Activated CD8-positive, alpha-beta T cell treated with anti-CD3 and anti-CD28 coated beads, Interleukin-2, amount 10 ng/mL, durations not matched to agents 7 days and 5 days (primary cell): ENCODE measurements at regions of chr21 and their contacts with region 1.

Region 1: DNA sequence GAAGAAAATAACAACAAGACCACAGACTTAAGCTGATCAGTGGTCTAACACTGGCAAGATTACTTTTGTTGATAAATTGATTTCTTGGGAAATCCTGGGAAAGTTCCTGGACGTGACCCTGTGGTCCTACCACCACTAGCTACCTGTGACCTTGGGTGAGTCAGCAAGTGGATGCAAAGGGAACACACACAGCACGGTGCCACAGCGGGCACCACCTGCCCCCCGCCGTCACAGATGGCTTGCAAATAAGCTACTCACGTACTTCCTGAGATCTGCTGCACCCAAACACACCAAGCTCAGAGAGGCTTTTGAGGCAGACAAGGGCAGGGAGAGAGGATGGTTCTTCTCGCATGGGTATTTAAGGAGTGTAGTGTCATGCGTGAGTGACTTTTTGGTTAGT is 12.7 kb downstream of the CFAP298 start:
- DNase-seq: no peak
- ATAC-seq: no peak
- H3K4me3 Mint-ChIP-seq: no peak overlapping the region
- H3K27ac Mint-ChIP-seq: no peak overlapping the region
- H3K4me1 Mint-ChIP-seq: peaks cover 3% of the 10 kb centered on the region
- H3K27me3 Mint-ChIP-seq: no peaks in the 10 kb centered on the region

Region 2: GRCh38 chr21:32386195-32386870 is 213.2 kb before region 1 on chr21:
- CTCF ChIA-PET with region 1: interaction called, 26 read pairs
- POLR2A ChIA-PET with region 1: no interaction called
- DNase-seq: no peak
- ATAC-seq: no peak
- H3K4me3 Mint-ChIP-seq: no peak overlapping the region
- H3K27ac Mint-ChIP-seq: no peak overlapping the region
- H3K4me1 Mint-ChIP-seq: peaks cover 27% of the 10 kb centered on the region
- H3K27me3 Mint-ChIP-seq: no peaks in the 10 kb centered on the region

Region 3: DNA sequence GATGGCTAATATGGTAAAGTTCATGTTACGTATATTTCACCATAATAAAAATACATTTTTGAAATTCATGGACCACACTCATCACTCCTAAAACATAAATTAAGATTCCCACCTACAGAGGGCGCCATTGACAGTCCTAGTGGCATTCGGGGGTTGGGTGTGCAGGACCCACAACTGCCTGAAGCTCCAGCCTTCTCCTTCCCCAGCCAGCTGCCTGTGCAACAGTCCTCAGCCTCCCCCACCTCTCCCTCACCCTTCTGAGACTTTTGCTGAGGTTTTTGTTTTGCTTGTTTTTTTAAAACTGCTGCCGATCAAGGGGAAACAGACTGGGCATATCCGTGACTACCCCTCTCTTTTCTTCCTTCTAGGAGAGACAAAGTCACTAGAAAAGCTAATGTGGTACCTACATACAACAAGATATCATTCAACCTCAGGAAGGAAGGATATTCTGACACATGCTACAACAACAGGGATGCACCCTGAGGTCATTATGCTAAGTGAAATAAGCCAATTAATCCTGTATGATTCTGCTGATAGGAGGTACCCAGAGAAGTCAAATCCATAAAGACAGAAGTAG is 196.2 kb before region 1 on chr21:
- CTCF ChIA-PET with region 1: interaction called, 82 read pairs
- POLR2A ChIA-PET with region 1: no interaction called
- DNase-seq: peak; percentile 74
- ATAC-seq: peak; percentile 87
- H3K4me3 Mint-ChIP-seq: no peak overlapping the region
- H3K27ac Mint-ChIP-seq: no peak overlapping the region
- H3K4me1 Mint-ChIP-seq: peaks cover 13% of the 10 kb centered on the region
- H3K27me3 Mint-ChIP-seq: peaks cover 14% of the 10 kb centered on the region

Region 4: GRCh38 chr21:32569261-32570230 is 30.0 kb before region 1 on chr21:
- CTCF ChIA-PET with region 1: interaction called, 40 read pairs
- POLR2A ChIA-PET with region 1: no interaction called
- DNase-seq: peak; percentile 90
- ATAC-seq: peak; percentile 97
- H3K4me3 Mint-ChIP-seq: peak overlapping the region; percentile 79
- H3K27ac Mint-ChIP-seq: peak overlapping the region; percentile 83
- H3K4me1 Mint-ChIP-seq: peaks cover 22% of the 10 kb centered on the region
- H3K27me3 Mint-ChIP-seq: no peaks in the 10 kb centered on the region

Region 5: DNA sequence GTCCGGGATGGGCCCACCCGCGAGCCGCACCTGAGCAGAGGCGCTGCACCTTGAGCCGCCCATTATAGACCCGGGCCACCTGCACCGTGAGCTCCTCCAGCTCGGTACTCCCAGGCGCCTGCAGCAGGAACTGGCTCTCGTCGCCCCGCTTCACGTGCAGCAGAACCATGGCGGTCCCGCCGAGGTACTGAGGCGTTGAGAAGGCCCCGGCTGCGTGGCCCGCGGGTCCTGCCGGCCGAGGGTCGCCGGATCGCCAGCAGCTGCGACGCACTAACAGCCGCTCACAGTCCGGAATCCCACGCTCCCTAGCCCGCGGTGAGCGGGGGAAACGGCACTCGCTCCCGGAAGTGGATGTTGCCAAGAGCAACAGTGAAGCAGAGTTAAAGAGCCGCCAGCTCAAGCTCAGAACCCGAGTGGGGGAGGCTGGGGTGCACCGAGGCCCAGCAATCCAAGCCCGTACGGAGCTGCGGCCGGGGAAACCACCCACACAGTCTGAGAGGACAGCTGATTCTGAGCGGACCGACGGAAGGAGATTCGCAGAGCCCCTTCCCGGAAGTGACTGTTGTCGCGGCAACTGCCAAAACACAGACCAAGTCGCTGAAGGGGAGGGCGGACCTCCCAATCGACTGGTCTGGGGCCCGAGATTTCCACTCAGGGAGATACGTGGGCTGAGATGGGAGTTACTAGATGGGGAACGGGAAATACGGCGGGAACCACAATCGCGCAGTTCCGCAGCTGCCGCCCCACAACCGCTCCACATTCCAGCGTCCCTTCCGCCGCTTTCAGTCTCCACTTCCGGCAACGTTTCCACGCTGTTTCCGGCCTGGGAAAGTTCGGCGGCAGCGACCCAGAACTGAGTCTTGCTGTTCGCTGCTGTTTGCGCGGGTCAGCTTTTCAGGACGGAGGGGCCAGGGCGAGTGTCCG is 12.8 kb after region 1 on chr21 and contains the start of gene CFAP298:
- CTCF ChIA-PET with region 1: interaction called, 44 read pairs
- POLR2A ChIA-PET with region 1: interaction called, 3 read pairs
- DNase-seq: peak; percentile 94
- ATAC-seq: peak; percentile 92
- H3K4me3 Mint-ChIP-seq: peak within 1 kb of the TSS; percentile 98
- H3K27ac Mint-ChIP-seq: peak within 1 kb of the TSS; percentile 92
- H3K4me1 Mint-ChIP-seq: peaks cover 5% of the 10 kb centered on the region
- H3K27me3 Mint-ChIP-seq: peaks cover 5% of the 10 kb centered on the region
- total RNA-seq, gene CFAP298: 36.7 to 38.2 TPM

Region 6: DNA sequence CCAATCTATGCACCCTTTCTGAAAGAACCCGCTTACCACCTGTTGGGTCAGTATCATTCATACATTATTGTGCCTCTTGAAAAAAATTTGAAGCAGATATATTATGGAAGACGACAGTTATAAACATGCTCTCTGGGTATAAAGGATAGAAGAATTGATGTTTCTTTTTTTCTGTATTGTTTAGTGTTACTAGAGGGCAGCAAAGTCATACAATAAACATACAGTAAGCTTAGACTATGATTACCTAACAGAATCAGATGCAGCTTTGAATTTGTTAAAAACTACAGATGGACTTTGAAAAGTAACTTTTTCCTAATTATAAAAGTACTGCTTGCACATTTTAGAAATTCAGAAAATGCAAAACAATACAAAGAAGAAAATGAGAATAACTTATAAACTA is 183.2 kb after region 1 on chr21:
- CTCF ChIA-PET with region 1: no interaction called
- POLR2A ChIA-PET with region 1: no interaction called
- DNase-seq: no peak
- ATAC-seq: no peak
- H3K4me3 Mint-ChIP-seq: no peak overlapping the region
- H3K27ac Mint-ChIP-seq: no peak overlapping the region
- H3K4me1 Mint-ChIP-seq: peaks cover 1% of the 10 kb centered on the region
- H3K27me3 Mint-ChIP-seq: no peaks in the 10 kb centered on the region